Spleen (tissue), 13 donors: ENCODE measurements at regions of chr7 and their contacts with region 1.

Region 1: GRCh38 chr7:23055582-23056178 is 41.8 kb upstream of the HYCC1 start:
- DNase-seq: no peak
- H3K4me3 ChIP-seq: no peak overlapping the region
- H3K27ac ChIP-seq: no peak overlapping the region
- H3K4me1 ChIP-seq: peaks cover 0 to 10% (median 0%) of the 10 kb centered on the region in 6 donors
- H3K27me3 ChIP-seq: no peaks in the 10 kb centered on the region
- CTCF ChIP-seq: peak; percentile 68 to 90 (median 84)
- POLR2A ChIP-seq: no peak

Region 2: GRCh38 chr7:22854158-22855048 is 201.3 kb before region 1 on chr7:
- intact Hi-C with region 1: loop called (anchors 5 kb)
- DNase-seq: peak; percentile 94
- H3K4me3 ChIP-seq: peak overlapping the region; percentile 64 to 88 (median 81)
- H3K27ac ChIP-seq: peak overlapping the region; percentile 81 to 93 (median 90)
- H3K4me1 ChIP-seq: peaks cover 0 to 33% (median 24%) of the 10 kb centered on the region in 6 donors
- H3K27me3 ChIP-seq: no peaks in the 10 kb centered on the region
- CTCF ChIP-seq: peak in 8 of 11 experiments; percentile 18 to 93 (median 66)
- POLR2A ChIP-seq: peak in 2 of 3 donors; percentile 23 to 26